Testis (tissue), 5 donors: ENCODE measurements at regions of chr11 and their contacts with region 1.

Region 1: DNA sequence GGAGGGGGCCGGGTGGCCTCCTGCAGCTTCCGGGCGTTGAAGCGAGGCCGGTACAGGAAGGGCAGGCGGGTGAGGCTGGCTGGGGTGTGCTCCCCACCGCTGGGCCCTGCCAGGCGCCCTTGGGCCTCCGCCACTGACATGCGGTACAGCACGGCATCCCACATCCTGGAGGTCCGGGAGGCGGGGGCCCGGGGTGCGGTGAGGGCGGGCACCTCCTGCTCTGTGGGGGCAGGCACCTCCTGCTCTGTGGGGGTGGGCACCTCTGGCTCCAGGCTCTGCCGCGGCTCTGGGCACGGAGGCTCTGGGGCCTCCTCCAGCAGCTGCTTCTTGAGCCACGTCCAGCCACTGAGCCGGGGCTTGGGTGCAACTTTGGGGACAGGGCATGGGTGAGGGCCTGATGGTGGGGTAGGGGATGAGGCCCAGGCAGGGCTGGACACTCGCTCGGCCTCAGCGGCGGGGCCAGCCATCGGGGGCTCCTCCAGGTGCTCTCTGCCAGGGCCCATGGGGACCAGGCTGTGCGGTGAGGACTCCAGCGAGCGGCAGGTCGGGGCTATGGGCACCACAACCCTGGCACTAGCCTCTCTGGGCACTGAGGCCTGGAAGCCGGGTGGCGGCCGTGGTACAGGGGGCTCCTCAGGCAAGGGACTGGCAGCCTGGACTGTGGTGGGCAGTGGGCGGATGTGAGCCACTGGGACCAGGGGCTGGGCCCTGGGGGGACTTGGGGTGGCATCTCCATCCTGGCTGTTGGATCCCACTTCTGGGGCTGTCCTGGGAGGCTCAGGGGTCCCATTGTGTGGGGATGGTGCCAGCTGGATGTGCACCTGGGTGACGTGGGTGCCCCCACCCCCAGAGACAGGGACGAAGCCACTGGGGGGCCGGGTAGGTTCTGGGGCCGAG is 2.2 kb downstream of the PRR33 start:
- DNase-seq: no peak
- H3K4me3 ChIP-seq: no peak overlapping the region
- H3K27ac ChIP-seq: no peak overlapping the region
- H3K4me1 ChIP-seq: no peaks in the 10 kb centered on the region
- H3K27me3 ChIP-seq: no peaks in the 10 kb centered on the region
- CTCF ChIP-seq: no peak
- POLR2A ChIP-seq: no peak

Region 2: GRCh38 chr11:1572197-1573076 is 317.0 kb before region 1 on chr11 and contains the start of gene DUSP8:
- intact Hi-C with region 1: no loop called
- DNase-seq: peak; percentile 93
- H3K4me3 ChIP-seq: peak within 1 kb of the TSS; percentile 54 to 66
- H3K27ac ChIP-seq: peak within 1 kb of the TSS; percentile 55 to 76
- H3K4me1 ChIP-seq: peaks cover 18% of the 10 kb centered on the region
- H3K27me3 ChIP-seq: no peaks in the 10 kb centered on the region
- CTCF ChIP-seq: no peak
- POLR2A ChIP-seq: no peak
- total RNA-seq, gene DUSP8: 8.5 to 14.4 TPM

Region 3: DNA sequence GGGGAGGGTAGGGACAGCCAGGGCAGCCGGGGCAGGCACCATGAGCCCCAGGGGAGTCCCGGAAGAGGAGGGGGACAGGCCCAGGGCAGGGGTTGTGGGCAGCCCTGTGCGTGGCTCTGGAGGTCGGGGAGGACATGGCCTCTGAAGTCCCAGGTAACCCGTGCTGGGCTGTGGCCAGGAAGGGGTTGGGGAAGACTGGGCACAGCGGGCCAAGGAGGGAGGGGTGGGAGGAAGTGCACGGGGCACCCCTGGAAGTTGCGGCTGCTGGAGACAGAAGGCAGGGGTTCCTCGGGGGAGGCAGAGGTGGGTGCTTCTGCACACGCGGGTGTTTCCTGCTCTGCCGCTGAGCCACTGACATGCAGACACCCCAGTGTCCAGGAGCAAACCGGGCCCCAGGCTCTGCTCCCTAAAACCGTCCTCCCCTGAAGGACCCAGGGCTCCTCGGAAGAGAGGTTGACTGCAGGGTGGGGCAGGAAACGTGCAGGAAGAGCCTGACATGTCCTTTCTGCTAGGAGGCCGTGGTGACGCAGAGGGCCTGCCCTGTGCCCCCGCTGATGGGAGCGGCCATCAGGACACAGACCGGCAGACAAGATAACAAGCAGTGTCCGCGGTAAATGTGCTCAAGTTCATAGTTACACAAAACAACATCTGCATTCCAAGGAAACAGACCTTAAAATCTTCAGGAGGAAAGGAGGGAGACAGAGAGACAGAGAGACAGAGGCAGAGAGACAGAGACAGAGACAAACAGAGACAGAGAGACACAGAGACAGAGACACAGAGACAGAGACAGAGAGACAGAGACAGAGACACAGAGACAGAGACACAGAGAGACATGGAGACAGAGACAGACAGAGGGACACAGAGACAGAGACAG is 45.0 kb before region 1 on chr11:
- intact Hi-C with region 1: loop called (anchors 5 kb)
- DNase-seq: peak; percentile 68
- H3K4me3 ChIP-seq: no peak overlapping the region
- H3K27ac ChIP-seq: peak overlapping the region; percentile 9 to 74
- H3K4me1 ChIP-seq: peaks cover 49% of the 10 kb centered on the region
- H3K27me3 ChIP-seq: no peaks in the 10 kb centered on the region
- CTCF ChIP-seq: no peak
- POLR2A ChIP-seq: no peak